BJ (cell line): ENCODE measurements at regions of chr13 and their contacts with region 1.

Region 1: GRCh38 chr13:39144941-39145533 is 106.8 kb downstream of the NHLRC3 start:
- DNase-seq: peak; percentile 11
- H3K4me3 ChIP-seq: no peak overlapping the region
- H3K27me3 ChIP-seq: no peaks in the 10 kb centered on the region
- CTCF ChIP-seq: peak; percentile 86

Region 2: GRCh38 chr13:38905831-38906230 is 239.2 kb before region 1 on chr13:
- CTCF ChIA-PET with region 1: no interaction called
- POLR2A ChIA-PET with region 1: no interaction called
- DNase-seq: no peak
- H3K4me3 ChIP-seq: no peak overlapping the region
- H3K27me3 ChIP-seq: no peaks in the 10 kb centered on the region
- CTCF ChIP-seq: no peak

Region 3: GRCh38 chr13:39159393-39159792 is 14.4 kb after region 1 on chr13:
- CTCF ChIA-PET with region 1: interaction called, 12 read pairs
- POLR2A ChIA-PET with region 1: no interaction called
- DNase-seq: no peak
- H3K4me3 ChIP-seq: no peak overlapping the region
- H3K27me3 ChIP-seq: peaks cover 2% of the 10 kb centered on the region
- CTCF ChIP-seq: no peak

Region 4: GRCh38 chr13:39170711-39171110 is 25.7 kb after region 1 on chr13:
- CTCF ChIA-PET with region 1: no interaction called
- POLR2A ChIA-PET with region 1: no interaction called
- DNase-seq: no peak
- H3K4me3 ChIP-seq: no peak overlapping the region
- H3K27me3 ChIP-seq: no peaks in the 10 kb centered on the region
- CTCF ChIP-seq: no peak